Posterior cingulate gyrus (tissue), 11 donors: ENCODE measurements at regions of chr21 and their contacts with region 1.

Region 1: DNA sequence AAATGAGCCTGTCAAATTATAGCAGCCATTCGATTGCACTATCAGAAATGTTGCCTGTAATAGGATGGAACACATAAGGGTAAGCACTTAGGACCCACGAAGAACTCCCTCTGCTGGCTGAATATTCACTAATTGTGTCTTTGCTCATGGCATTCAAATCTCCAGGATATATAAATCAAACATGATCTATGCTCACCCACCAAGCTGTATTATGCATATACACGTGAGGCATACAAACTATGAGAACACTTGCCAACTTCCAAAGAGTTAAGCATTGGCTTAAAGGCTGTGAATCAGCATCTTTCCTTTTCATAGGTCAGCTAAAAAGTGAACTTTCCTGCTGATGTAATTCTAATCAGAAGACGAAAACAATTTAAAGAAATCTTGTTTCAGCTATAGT is 34.5 kb downstream of the TMPRSS15 start:
- DNase-seq: no peak

Region 2: GRCh38 chr21:17738191-17738958 is 630.7 kb before region 1 on chr21:
- intact Hi-C with region 1: no loop called
- DNase-seq: no peak

Region 3: GRCh38 chr21:17768840-17769446 is 600.2 kb before region 1 on chr21:
- intact Hi-C with region 1: no loop called
- DNase-seq: no peak

Region 4: GRCh38 chr21:18294100-18294499 is 75.0 kb before region 1 on chr21:
- intact Hi-C with region 1: loop called (anchors 2 kb)
- DNase-seq: peak in 2 of 10 donors; percentile 60 to 64

Region 5: GRCh38 chr21:18620436-18620835 is 251.3 kb after region 1 on chr21:
- intact Hi-C with region 1: no loop called
- DNase-seq: no peak